MCF 10A (cell line): ENCODE measurements at regions of chr11 and their contacts with region 1.

Region 1: GRCh38 chr11:61871158-61871597 is 20.2 kb downstream of the FADS3 start:
- DNase-seq: peak; percentile 78
- H3K4me3 Mint-ChIP-seq: no peak overlapping the region
- H3K27ac Mint-ChIP-seq: no peak overlapping the region
- H3K4me1 Mint-ChIP-seq: peaks cover 18% of the 10 kb centered on the region
- H3K27me3 Mint-ChIP-seq: no peaks in the 10 kb centered on the region
- CTCF ChIP-seq: peak; percentile 97

Region 2: GRCh38 chr11:61885166-61885778 is 14.1 kb after region 1 on chr11:
- CTCF ChIA-PET with region 1: interaction called, 20 read pairs
- POLR2A ChIA-PET with region 1: interaction called, 6 read pairs
- intact Hi-C with region 1: loop called (anchors 1 kb)
- DNase-seq: no peak
- H3K4me3 Mint-ChIP-seq: no peak overlapping the region
- H3K27ac Mint-ChIP-seq: no peak overlapping the region
- H3K4me1 Mint-ChIP-seq: peaks cover 31% of the 10 kb centered on the region
- H3K27me3 Mint-ChIP-seq: no peaks in the 10 kb centered on the region
- CTCF ChIP-seq: no peak

Region 3: GRCh38 chr11:61891331-61892084 is 20.3 kb after region 1 on chr11 and contains the start of gene FADS3:
- CTCF ChIA-PET with region 1: interaction called, 6 read pairs
- POLR2A ChIA-PET with region 1: interaction called, 6 read pairs
- intact Hi-C with region 1: loop called (anchors 1 kb)
- DNase-seq: peak; percentile 77
- H3K4me3 Mint-ChIP-seq: peak within 1 kb of the TSS; percentile 83
- H3K27ac Mint-ChIP-seq: peak within 1 kb of the TSS; percentile 61
- H3K4me1 Mint-ChIP-seq: peaks cover 23% of the 10 kb centered on the region
- H3K27me3 Mint-ChIP-seq: no peaks in the 10 kb centered on the region
- CTCF ChIP-seq: no peak
- total RNA-seq, gene FADS3: 145 and 184 TPM in 2 replicates

Region 4: GRCh38 chr11:62054484-62055121 is 183.4 kb after region 1 on chr11:
- CTCF ChIA-PET with region 1: interaction called, 3 read pairs
- POLR2A ChIA-PET with region 1: no interaction called
- intact Hi-C with region 1: loop called (anchors 1 kb)
- DNase-seq: peak; percentile 93
- H3K4me3 Mint-ChIP-seq: peak overlapping the region; percentile 26
- H3K27ac Mint-ChIP-seq: peak overlapping the region; percentile 75
- H3K4me1 Mint-ChIP-seq: peaks cover 18% of the 10 kb centered on the region
- H3K27me3 Mint-ChIP-seq: no peaks in the 10 kb centered on the region
- CTCF ChIP-seq: peak; percentile 81